Esophagus squamous epithelium (tissue), 5 donors: ENCODE measurements at regions of chr2 and their contacts with region 1.

Region 1: DNA sequence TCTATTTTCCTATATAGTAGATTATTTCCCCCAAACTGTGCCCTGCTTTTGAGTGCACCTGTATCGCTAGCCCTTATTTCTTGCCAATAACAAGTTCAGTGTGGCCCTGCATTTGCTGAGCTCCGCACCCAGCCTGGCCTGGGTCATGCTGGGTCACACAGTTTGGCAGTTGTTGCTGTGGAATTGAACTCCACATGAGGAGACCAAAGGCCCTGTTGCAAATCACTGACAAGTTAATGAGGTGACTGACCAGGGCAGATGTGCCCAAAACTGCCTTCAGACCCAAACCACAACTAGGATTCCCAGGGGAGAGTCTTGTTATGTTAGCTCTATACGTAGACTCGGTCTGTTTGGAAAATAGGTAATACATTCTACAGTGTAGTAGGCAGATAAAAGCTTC is 31.0 kb downstream of the COL4A4 start:
- DNase-seq: no peak
- H3K4me3 ChIP-seq: no peak overlapping the region
- H3K27ac ChIP-seq: no peak overlapping the region
- H3K4me1 ChIP-seq: no peaks in the 10 kb centered on the region
- H3K27me3 ChIP-seq: peaks cover 0 to 3% (median 0%) of the 10 kb centered on the region in 4 donors
- CTCF ChIP-seq: no peak
- POLR2A ChIP-seq: no peak

Region 2: GRCh38 chr2:227238238-227239237 is 105.6 kb after region 1 on chr2:
- intact Hi-C with region 1: loop called (anchors 5 kb)
- DNase-seq: no peak
- H3K4me3 ChIP-seq: no peak overlapping the region
- H3K27ac ChIP-seq: no peak overlapping the region
- H3K4me1 ChIP-seq: no peaks in the 10 kb centered on the region
- H3K27me3 ChIP-seq: peaks cover 0 to 5% (median 0%) of the 10 kb centered on the region in 4 donors
- CTCF ChIP-seq: peak; percentile 80 to 97 (median 84)
- POLR2A ChIP-seq: no peak